ENCODE measurements at regions of chr2 and their contacts with region 1.

Region 1: DNA sequence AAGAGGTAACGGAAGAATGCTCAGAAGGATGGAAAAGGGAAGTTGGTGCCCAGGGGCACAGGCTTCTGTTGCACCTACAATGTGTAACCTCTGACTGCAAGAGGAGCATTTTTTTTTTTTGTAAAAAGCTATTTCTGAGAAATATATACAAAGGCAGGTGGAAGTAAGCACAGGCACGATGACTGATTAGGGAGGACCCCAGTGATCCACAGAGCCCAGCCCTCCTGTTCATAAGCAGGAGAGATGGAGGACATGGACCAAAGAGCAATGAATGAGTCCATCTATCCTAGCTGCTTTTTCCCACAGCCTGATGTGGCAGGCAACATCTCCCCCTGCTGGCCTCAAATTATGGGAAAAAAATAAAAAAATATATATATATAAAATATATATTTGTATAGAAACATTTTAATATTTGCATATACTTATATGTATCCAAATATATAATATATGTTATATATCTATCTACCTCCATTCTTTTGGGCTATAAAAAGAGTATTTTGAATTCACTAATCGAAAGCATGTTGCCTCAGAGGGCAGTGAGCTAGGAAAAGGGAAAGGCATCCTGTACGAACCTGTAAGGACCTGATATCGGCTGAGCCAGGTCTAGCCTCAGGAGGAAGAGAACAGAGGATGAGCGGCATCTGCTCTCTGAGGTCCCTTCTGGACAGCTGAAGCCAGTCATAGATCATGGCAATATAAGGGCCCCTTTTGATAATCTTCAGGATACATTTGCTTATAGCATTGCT is 166.0 kb upstream of the STK17B start:
- DNase-seq: peak; percentile 43
- H3K4me3 ChIP-seq: no peak overlapping the region
- H3K27ac ChIP-seq: no peak overlapping the region
- H3K4me1 ChIP-seq: peaks cover 29% of the 10 kb centered on the region
- H3K27me3 ChIP-seq: no peaks in the 10 kb centered on the region
- CTCF ChIP-seq: peak; percentile 26 to 40
- POLR2A ChIP-seq: no peak

Region 2: DNA sequence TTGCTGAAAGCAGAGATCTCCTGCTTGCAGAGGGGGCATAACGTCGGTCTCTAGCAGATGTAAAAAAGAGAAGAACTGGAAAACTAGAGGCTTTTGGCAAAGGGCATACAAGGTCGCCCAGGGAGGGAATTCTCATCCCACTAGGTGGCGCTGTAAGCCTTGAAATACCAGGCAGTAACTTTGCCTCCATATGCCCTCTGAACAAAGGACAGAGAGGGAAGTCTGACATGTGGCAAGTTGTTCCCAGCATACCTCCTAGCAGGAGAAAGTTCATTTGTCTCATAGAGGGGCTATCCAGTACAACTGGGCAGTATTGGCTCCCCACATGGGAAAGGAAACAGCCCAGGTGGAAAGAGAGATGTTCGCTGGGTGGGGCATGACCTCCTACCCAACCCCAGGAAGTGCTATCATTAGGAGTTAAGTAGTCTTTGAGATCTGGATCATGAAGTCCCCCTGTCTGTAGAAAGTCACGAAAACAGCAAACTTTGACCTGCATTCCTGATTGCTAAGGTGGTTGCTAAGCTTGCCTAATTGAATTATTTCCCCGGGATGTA is 205.9 kb before region 1 on chr2:
- CTCF ChIA-PET with region 1: no interaction called
- POLR2A ChIA-PET with region 1: no interaction called
- dilution Hi-C with region 1: no loop called
- intact Hi-C with region 1: loop called (anchors 5 kb)
- DNase-seq: peak; percentile 18
- H3K4me3 ChIP-seq: no peak overlapping the region
- H3K27ac ChIP-seq: no peak overlapping the region
- H3K4me1 ChIP-seq: no peaks in the 10 kb centered on the region
- H3K27me3 ChIP-seq: no peaks in the 10 kb centered on the region
- CTCF ChIP-seq: peak in 1 of 2 donors; percentile 19
- POLR2A ChIP-seq: no peak

Region 3: GRCh38 chr2:196314780-196315179 is 22.6 kb before region 1 on chr2:
- CTCF ChIA-PET with region 1: interaction called, 42 read pairs
- POLR2A ChIA-PET with region 1: no interaction called
- dilution Hi-C with region 1: no loop called
- intact Hi-C with region 1: no loop called
- DNase-seq: no peak
- H3K4me3 ChIP-seq: no peak overlapping the region
- H3K27ac ChIP-seq: no peak overlapping the region
- H3K4me1 ChIP-seq: peaks cover 9% of the 10 kb centered on the region
- H3K27me3 ChIP-seq: no peaks in the 10 kb centered on the region
- CTCF ChIP-seq: no peak
- POLR2A ChIP-seq: no peak

Region 4: DNA sequence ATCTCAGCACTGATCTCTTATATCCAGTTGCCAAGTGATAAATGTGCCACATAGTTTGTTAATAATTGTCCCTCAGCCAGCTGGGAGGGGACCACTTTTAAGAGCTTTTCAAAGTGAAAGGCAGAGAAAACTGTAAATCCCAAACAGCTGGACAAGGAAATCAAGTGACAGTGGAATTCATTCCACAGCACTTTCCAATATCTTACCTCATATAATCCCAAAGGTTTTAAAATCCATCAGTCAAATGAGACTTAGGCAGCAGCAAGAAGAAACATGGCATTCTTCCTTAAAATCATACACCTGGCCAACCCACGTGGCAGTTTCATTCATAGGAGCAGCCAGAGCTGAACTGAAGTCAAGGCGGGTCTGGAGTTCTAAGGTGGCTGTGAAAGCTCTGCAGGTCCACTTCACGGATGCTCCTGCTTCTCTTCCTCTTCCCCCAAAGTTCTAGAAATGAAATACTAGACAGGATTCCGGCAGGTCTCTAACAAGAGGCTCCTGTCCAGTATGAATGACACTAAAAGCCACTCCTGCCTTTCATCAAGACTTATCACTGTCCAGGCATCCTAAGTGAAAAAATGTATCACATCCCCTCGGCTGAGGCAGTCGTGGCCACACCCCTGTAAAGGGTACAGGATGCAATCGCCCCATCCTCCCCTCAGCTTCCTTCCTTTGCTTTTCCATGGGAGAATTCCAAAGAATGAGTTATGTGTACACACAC is 24.4 kb after region 1 on chr2:
- CTCF ChIA-PET with region 1: interaction called, 32 read pairs
- POLR2A ChIA-PET with region 1: interaction called, 5 read pairs
- dilution Hi-C with region 1: no loop called
- intact Hi-C with region 1: no loop called
- DNase-seq: peak; percentile 85
- H3K4me3 ChIP-seq: peak overlapping the region; percentile 34 to 94 (median 57)
- H3K27ac ChIP-seq: peak overlapping the region; percentile 73
- H3K4me1 ChIP-seq: peaks cover 58% of the 10 kb centered on the region
- H3K27me3 ChIP-seq: no peaks in the 10 kb centered on the region
- CTCF ChIP-seq: no peak
- POLR2A ChIP-seq: peak; percentile 80

Region 5: GRCh38 chr2:196750982-196751635 is 413.7 kb after region 1 on chr2:
- CTCF ChIA-PET with region 1: no interaction called
- POLR2A ChIA-PET with region 1: no interaction called
- dilution Hi-C with region 1: no loop called
- intact Hi-C with region 1: loop called (anchors 10 kb)
- DNase-seq: peak; percentile 77
- H3K4me3 ChIP-seq: no peak overlapping the region
- H3K27ac ChIP-seq: no peak overlapping the region
- H3K4me1 ChIP-seq: no peaks in the 10 kb centered on the region
- H3K27me3 ChIP-seq: no peaks in the 10 kb centered on the region
- CTCF ChIP-seq: peak; percentile 80 to 90
- POLR2A ChIP-seq: no peak

Measured in endothelial cell of umbilical vein (primary cell).